Activated B cell treated with CpG ODN at 0.5 μM for 24 hours (primary cell): ENCODE measurements at regions of chr16 and their contacts with region 1.

Region 1: DNA sequence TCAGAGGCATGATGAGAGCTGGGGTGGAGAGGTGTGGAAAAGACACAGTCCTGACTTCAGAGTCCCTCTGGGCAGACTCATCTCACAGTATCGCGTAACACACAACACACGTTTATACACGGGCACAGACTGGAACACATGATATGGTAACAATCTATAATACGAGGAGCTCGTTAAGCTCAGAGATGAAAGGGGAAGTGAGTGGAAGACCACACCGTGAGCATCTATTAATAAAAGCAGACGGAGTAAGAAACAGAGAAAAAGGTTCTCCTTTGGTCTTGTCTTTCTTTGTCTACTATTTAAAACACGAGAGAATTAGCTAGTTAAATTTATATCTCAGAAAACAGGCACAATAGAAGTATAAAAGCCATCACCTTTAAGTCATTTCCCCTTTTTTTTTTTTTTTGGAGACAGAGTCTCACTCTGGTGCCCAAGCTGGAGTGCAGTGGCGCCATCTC is 13.5 kb downstream of the ANKRD11 start:
- DNase-seq: peak; percentile 29
- ATAC-seq: peak; percentile 92
- H3K4me3 Mint-ChIP-seq: peak overlapping the region; percentile 69
- H3K27ac Mint-ChIP-seq: peak overlapping the region; percentile 74
- H3K4me1 Mint-ChIP-seq: peaks cover 86% of the 10 kb centered on the region
- H3K27me3 Mint-ChIP-seq: no peaks in the 10 kb centered on the region
- CTCF ChIP-seq: no peak

Region 2: DNA sequence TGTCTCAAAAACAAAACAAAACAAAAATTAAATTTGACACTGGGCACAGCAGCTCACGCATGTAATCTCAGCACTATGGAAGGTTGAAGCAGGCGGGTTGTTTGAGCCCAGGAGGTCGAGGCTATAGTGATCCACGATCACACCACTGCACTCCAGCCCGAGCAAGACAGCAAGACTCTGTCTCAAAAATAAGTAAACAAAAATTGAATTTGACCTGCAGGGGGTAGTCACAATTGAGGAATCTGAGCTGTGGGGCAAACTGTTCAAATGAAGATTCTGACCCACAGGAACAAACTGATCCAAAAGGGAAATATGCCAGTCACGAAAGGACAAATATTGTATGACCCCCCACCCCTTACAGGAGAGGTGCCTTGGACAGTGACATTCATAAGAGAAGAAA is 16.3 kb before region 1 on chr16:
- CTCF ChIA-PET with region 1: no interaction called
- POLR2A ChIA-PET with region 1: interaction called, 3 read pairs
- intact Hi-C with region 1: loop called (anchors 1 kb)
- DNase-seq: no peak
- ATAC-seq: peak; percentile 18
- H3K4me3 Mint-ChIP-seq: no peak overlapping the region
- H3K27ac Mint-ChIP-seq: no peak overlapping the region
- H3K4me1 Mint-ChIP-seq: peaks cover 48% of the 10 kb centered on the region
- H3K27me3 Mint-ChIP-seq: no peaks in the 10 kb centered on the region
- CTCF ChIP-seq: no peak

Region 3: DNA sequence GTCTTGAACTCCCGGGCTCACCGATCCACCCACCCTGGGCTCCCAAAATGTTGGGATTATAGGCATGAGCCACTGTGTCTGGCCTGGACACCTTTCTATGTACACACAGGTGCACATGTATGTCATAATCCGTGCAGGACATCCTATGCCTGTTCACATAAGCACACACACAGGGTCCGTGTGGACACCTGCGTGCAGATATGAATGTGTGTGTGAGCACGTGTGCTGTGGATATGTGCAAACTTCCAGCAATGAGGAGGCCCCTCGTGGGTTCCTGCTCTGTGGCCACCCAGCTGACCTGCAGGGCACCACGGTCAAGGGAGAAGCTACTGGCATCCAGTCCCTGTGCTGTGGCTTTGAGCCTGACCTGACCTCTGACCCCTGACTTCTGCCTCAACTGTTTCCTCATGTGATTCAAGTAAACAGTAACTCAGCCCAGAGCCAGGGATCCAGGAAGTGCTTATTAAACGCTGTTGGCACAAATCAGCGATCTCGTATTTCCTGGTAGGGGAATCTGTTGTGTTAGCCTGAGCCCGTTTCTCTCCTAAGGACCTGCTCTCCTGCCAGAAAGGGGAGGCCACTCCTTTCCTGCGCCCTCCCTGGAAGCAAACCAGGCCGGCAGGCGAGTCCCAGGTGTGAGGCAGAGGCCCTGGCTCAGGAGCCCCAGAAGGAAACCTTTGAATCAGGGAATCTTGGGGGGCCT is 105.2 kb after region 1 on chr16:
- CTCF ChIA-PET with region 1: no interaction called
- POLR2A ChIA-PET with region 1: no interaction called
- intact Hi-C with region 1: no loop called
- DNase-seq: no peak
- ATAC-seq: no peak
- H3K4me3 Mint-ChIP-seq: no peak overlapping the region
- H3K27ac Mint-ChIP-seq: no peak overlapping the region
- H3K4me1 Mint-ChIP-seq: no peaks in the 10 kb centered on the region
- H3K27me3 Mint-ChIP-seq: no peaks in the 10 kb centered on the region
- CTCF ChIP-seq: no peak

Region 4: DNA sequence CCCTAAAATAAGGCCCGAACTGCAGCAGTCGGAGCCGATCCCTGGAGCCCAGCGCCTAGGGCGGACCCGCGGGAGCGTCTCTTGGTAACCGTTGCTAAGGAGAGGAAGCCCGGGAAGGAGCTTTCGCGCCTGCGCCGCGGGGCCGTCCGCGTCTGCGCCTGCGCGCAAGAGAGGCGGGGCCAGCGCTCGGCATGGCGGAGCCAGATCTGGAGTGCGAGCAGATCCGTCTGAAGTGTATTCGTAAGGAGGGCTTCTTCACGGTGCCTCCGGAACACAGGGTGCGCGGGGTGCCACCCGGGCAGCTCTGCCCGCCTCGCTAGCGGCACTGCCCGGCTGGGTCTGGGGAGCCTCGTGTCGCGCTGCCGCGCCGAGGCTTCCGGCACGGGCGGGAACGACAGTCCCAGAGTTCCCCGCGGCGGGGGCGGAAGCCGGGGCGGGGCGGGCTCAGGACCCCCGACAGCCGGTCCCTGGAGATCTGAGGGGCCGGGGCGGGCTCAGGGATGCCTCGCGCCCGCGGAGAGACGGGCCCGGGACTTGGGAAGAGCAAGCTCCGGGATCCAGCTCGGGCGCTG is 209.8 kb after region 1 on chr16 and contains the start of gene CDK10:
- CTCF ChIA-PET with region 1: no interaction called
- POLR2A ChIA-PET with region 1: no interaction called
- intact Hi-C with region 1: no loop called
- DNase-seq: peak; percentile 98
- ATAC-seq: peak; percentile 91
- H3K4me3 Mint-ChIP-seq: peak within 1 kb of the TSS; percentile 93
- H3K27ac Mint-ChIP-seq: peak within 1 kb of the TSS; percentile 90
- H3K4me1 Mint-ChIP-seq: peaks cover 18% of the 10 kb centered on the region
- H3K27me3 Mint-ChIP-seq: no peaks in the 10 kb centered on the region
- CTCF ChIP-seq: no peak
- total RNA-seq, gene CDK10: 67.9 and 76.1 TPM in 2 replicates